ENCODE measurements at regions of chr2 and their contacts with region 1.

Region 1: DNA sequence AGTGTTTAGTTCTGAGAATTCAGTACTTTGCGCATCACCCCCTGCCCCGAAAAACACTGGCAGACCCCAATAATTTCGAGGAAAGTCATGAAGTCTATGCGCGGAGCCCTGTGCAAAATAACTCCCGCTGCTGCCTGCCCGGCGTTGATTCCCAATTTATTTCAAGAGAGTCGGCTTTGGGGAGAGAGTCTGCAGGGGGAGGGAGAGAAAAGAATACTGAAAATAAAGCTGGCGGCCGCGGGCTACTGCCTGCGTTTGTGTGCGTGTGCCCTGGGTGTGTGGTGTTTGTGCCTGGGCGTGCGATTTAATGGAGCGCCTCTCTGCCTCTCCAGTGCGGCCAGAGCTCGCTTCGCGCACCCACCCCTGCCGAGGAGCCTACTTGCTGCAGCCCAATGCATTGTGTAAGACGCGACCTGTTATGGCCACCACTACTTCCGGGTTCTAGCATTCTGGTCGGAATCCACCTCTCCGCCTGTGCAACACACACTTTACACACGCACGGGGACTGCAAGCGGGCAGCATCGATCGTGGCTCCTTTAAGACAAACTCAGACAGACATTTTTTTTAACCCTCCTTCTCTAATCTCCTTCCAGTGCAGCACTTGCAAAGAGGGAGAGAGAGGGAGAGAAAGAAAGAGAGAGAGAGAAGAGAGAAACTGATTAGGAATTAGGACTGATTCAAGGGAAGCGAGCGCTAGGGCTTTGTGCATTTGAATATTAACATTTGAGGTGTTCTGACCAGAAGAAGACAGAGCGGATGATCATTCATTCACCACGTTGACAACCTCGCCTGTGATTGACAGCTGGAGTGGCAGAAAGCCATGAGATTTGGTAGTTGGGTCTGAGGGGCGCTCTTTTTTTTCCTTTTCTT is at the start of gene MEIS1:
- DNase-seq: peak; percentile 87
- ATAC-seq: peak; percentile 90
- H3K4me3 ChIP-seq: peak within 1 kb of the TSS; percentile 67
- H3K27ac ChIP-seq: peak within 1 kb of the TSS; percentile 93
- H3K4me1 ChIP-seq: peaks cover 4% of the 10 kb centered on the region
- H3K27me3 ChIP-seq: peaks cover 30% of the 10 kb centered on the region
- CTCF ChIP-seq: no peak
- total RNA-seq, gene MEIS1: 48.0 TPM

Region 2: GRCh38 chr2:66574701-66575624 is 140.0 kb after region 1 on chr2:
- intact Hi-C with region 1: loop called (anchors 5 kb)
- DNase-seq: no peak
- ATAC-seq: peak; percentile 58
- H3K4me3 ChIP-seq: peak overlapping the region; percentile 55
- H3K27ac ChIP-seq: peak overlapping the region; percentile 90
- H3K4me1 ChIP-seq: peaks cover 27% of the 10 kb centered on the region
- H3K27me3 ChIP-seq: peaks cover 64% of the 10 kb centered on the region
- CTCF ChIP-seq: peak; percentile 45